BJ (cell line): ENCODE measurements at regions of chr11 and their contacts with region 1.

Region 1: GRCh38 chr11:10792398-10792975 is 16.2 kb downstream of the EIF4G2 start:
- DNase-seq: no peak
- H3K4me3 ChIP-seq: no peak overlapping the region
- H3K27me3 ChIP-seq: 0 out of 2 replicates have a peak, but pooled peaks cover 1% of the 10 kb centered on the region
- CTCF ChIP-seq: peak; percentile 97

Region 2: DNA sequence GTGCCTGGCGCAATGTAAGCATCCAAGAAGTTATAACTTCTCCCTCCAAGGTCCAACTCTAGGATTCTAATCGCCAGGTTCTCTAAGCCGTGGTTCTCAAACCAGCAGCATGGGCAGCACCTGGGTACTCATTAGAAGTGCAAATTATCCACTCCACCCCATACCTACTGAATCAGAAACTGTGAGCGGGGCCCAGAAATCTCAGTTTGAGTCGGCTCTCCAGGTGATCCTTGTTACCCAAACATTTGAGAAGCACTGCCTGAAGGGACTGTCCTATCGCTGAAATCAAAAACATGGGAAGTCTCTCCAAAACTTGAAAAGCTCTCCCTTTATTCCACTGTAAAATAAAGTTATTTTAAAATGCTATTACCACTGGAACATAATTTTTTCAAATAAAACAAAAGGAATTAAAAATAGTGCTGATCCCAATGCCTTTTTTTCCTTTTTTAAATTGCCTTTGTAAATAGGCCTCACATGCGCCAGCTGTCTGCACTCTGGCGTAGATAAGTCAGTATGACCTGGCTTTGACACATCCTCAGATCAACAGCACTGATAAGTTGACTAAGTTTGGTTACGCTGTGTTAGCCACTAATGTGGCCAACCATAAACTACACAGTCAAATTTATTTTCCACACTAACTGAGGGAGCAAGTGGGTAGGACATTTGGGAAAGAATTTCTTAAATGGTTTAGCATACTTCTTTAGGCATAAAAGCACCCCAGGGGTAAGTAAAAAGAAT is 49.8 kb before region 1 on chr11:
- CTCF ChIA-PET with region 1: no interaction called
- POLR2A ChIA-PET with region 1: no interaction called
- DNase-seq: peak; percentile 74
- H3K4me3 ChIP-seq: no peak overlapping the region
- H3K27me3 ChIP-seq: no peaks in the 10 kb centered on the region
- CTCF ChIP-seq: no peak

Region 3: GRCh38 chr11:10899121-10899830 is 106.8 kb after region 1 on chr11:
- CTCF ChIA-PET with region 1: interaction called, 12 read pairs
- POLR2A ChIA-PET with region 1: no interaction called
- DNase-seq: no peak
- H3K4me3 ChIP-seq: no peak overlapping the region
- H3K27me3 ChIP-seq: no peaks in the 10 kb centered on the region
- CTCF ChIP-seq: no peak

Region 4: DNA sequence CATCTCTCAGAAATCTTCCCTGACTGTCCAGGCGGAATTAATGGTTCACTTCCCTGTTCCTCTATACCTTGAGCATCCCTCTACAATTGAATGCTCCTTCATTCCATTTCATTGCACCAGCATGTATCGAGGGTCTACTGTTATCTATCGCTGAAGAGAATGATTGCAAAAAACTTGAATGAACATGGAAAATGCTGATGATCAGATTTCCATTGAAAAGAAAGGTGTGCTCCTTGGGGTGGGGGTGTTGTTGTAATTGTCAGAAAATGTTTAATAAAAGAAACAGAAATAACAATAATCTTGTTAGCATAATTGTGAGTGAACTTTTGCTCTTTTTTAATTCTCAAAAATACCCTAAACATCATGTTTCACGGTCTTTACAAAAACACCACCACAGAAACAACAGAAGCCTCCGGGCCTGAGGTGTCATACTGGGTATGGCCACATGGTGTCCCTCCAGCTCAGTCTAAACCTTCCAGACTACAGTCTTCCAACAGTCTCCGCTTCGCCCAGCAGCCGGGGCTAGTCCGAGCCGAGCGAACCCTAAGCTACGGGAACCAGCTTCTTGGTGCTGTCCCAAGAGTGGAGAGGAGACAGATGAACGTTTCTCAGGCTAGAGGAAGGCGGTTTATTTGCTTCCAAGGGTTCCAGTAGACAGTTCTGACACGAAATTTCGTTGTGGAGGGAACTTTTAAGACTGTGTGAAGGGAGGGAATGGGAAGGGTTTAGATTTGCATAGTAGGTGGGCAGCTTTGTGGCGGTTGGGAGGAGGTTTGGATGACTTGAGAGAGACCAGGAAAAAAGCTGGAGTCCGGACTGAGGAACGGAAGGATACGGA is 141.2 kb after region 1 on chr11:
- CTCF ChIA-PET with region 1: interaction called, 26 read pairs
- POLR2A ChIA-PET with region 1: no interaction called
- DNase-seq: peak; percentile 62
- H3K4me3 ChIP-seq: peak overlapping the region; percentile 49
- H3K27me3 ChIP-seq: no peaks in the 10 kb centered on the region
- CTCF ChIP-seq: peak; percentile 91

Region 5: DNA sequence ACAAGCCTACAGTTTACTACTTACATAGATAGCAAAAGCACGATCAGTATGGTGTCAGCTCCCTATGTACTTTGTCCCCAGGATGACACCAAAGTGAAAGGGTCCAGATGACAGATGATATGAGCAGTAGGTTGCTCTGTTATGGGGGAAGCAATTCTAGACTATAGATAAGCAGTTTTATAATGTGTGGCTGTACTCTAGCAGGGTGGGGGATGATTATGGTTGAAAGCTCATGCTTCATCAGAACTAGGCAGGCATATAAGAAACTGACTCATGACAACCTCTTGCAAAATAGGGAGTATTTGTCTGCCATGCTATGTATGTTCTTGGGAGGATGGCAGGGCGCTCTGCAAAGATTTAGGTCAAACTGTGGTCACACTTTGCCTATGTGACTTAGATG is 223.6 kb after region 1 on chr11:
- CTCF ChIA-PET with region 1: interaction called, 195 read pairs
- POLR2A ChIA-PET with region 1: no interaction called
- DNase-seq: no peak
- H3K4me3 ChIP-seq: no peak overlapping the region
- H3K27me3 ChIP-seq: peaks cover 7% of the 10 kb centered on the region
- CTCF ChIP-seq: no peak

Region 6: DNA sequence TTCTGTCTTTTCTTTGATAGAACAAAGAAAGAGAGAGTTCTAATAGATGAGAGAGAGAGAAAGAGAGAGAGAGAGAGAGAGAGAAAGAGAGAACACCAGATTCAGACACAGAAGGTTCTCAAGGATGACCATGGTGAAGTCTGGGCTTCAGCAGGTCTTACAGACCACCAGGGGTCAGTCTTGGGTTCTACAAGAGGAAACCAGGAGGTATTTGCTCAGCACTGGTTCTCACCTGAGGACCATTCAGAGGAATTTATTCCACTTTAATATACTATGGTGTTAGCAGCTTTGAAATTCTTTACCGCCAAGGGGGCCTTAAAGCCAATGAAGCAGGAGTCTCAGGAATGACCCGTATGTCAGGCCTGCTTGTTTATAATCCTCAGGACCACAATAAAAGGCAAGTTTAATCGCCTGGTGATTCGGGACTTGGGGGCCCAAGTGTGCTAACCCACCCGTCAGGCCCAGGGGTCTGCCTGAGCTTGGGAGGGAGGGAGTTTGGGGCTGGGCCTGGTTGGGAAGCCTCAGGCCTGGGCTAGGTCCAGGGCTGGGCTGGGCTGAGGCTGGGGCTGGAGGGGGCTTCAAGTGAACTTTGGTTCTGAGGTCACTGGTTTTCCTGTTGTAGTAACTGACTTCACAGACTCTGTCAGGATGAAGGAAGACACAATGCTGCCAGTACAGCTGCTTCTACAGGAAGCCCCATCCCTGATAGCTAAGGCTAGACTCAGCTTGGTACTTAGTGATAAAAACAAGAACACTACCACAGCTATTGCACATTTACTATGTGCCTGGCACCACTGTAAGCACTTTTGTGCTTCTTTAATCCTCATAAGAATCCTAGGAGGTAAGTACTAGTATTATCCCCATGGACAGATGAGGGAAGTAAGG is 244.6 kb after region 1 on chr11:
- CTCF ChIA-PET with region 1: interaction called, 10 read pairs
- POLR2A ChIA-PET with region 1: no interaction called
- DNase-seq: no peak
- H3K4me3 ChIP-seq: no peak overlapping the region
- H3K27me3 ChIP-seq: peaks cover 1% of the 10 kb centered on the region
- CTCF ChIP-seq: peak; percentile 61